ENCODE measurements at regions of chr2 and their contacts with region 1.

Region 1: GRCh38 chr2:102632380-102633175 is 13.2 kb downstream of the SLC9A2 start:
- DNase-seq: peak; percentile 23
- H3K4me3 Mint-ChIP-seq: no peak overlapping the region
- H3K27ac Mint-ChIP-seq: no peak overlapping the region
- H3K4me1 Mint-ChIP-seq: peaks cover 6% of the 10 kb centered on the region
- H3K27me3 Mint-ChIP-seq: peaks cover 2% of the 10 kb centered on the region

Region 2: GRCh38 chr2:102540641-102541281 is 91.8 kb before region 1 on chr2:
- CTCF ChIA-PET with region 1: no interaction called
- intact Hi-C with region 1: no loop called
- DNase-seq: no peak
- H3K4me3 Mint-ChIP-seq: no peak overlapping the region
- H3K27ac Mint-ChIP-seq: no peak overlapping the region
- H3K4me1 Mint-ChIP-seq: no peaks in the 10 kb centered on the region
- H3K27me3 Mint-ChIP-seq: peaks cover 10% of the 10 kb centered on the region

Region 3: GRCh38 chr2:102657770-102658169 is 25.2 kb after region 1 on chr2:
- CTCF ChIA-PET with region 1: no interaction called
- intact Hi-C with region 1: loop called (anchors 1 kb)
- DNase-seq: peak; percentile 83
- H3K4me3 Mint-ChIP-seq: no peak overlapping the region
- H3K27ac Mint-ChIP-seq: peak overlapping the region; percentile 88
- H3K4me1 Mint-ChIP-seq: peaks cover 21% of the 10 kb centered on the region
- H3K27me3 Mint-ChIP-seq: peaks cover 7% of the 10 kb centered on the region